H1 (cell line): ENCODE measurements at regions of chr14 and their contacts with region 1.

Region 1: DNA sequence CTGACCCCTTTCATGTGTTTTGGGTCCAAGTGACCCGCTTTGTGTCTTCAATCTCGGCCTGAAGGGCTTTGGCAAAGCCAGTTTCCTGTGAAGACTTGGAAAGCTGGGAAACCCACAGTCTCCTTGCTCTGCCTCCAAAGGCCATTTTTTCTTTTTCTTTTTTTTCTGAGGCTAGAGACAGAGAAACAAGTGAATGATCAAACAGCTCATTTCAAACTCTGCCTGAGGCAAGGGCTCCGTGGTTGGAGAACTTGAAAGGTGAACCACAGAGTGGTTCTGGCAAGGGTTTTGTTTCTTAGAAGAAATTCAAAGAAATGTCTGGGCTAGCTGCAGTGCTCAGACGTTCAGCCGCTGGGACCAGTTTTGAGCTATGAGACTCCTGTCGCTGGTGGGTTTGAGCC is 62.7 kb downstream of the ERH start:
- DNase-seq: no peak
- H3K4me3 ChIP-seq: no peak overlapping the region
- H3K27ac ChIP-seq: no peak overlapping the region
- H3K4me1 ChIP-seq: peaks cover 0 to 2% (median 0%) of the 10 kb centered on the region in 4 experiments; a peak in 1 of 7 replicates
- H3K27me3 ChIP-seq: no peaks in the 10 kb centered on the region
- CTCF ChIP-seq: no peak
- EP300 ChIP-seq: no peak
- POLR2A ChIP-seq: no peak
- RAD21 ChIP-seq: no peak

Region 2: GRCh38 chr14:68924186-68925158 is 410.9 kb before region 1 on chr14:
- CTCF ChIA-PET with region 1: no interaction called
- POLR2A ChIA-PET with region 1: no interaction called
- DNase-seq: peak in 1 of 2 experiments; percentile 47
- H3K4me3 ChIP-seq: no peak overlapping the region
- H3K27ac ChIP-seq: no peak overlapping the region; the same call in 1 of the 2 replicates
- H3K4me1 ChIP-seq: peaks cover 0 to 13% (median 9%) of the 10 kb centered on the region in 4 experiments; a peak in 5 of 7 replicates
- H3K27me3 ChIP-seq: no peaks in the 10 kb centered on the region
- CTCF ChIP-seq: no peak
- EP300 ChIP-seq: no peak
- POLR2A ChIP-seq: no peak
- RAD21 ChIP-seq: no peak

Region 3: GRCh38 chr14:69247676-69248440 is 87.5 kb before region 1 on chr14:
- CTCF ChIA-PET with region 1: interaction called, 10 read pairs
- POLR2A ChIA-PET with region 1: no interaction called
- DNase-seq: no peak
- H3K4me3 ChIP-seq: no peak overlapping the region
- H3K27ac ChIP-seq: no peak overlapping the region
- H3K4me1 ChIP-seq: no peaks in the 10 kb centered on the region; a peak in 1 of 7 replicates
- H3K27me3 ChIP-seq: no peaks in the 10 kb centered on the region
- CTCF ChIP-seq: no peak
- EP300 ChIP-seq: no peak
- POLR2A ChIP-seq: no peak
- RAD21 ChIP-seq: no peak

Region 4: DNA sequence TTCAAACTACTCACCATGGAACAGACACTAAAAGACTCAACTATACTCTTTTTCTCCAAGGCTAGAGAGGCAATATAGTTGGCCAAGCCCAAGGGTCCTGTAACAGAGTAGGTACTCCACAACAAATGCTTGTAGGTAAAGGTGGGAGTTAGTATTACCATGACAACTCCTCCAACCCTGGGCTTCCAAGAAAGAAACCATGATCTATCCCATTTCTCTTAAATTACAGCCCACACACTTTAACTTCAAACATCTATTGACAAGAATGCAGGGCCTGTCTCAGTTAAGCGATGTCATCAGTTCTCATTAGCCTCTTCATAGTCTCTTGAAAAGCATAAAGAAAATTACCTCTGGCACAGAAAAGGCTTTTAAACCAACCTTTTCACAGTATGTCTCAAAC is 37.7 kb after region 1 on chr14:
- CTCF ChIA-PET with region 1: no interaction called
- POLR2A ChIA-PET with region 1: no interaction called
- DNase-seq: no peak
- H3K4me3 ChIP-seq: no peak overlapping the region
- H3K27ac ChIP-seq: no peak overlapping the region
- H3K4me1 ChIP-seq: no peaks in the 10 kb centered on the region
- H3K27me3 ChIP-seq: no peaks in the 10 kb centered on the region
- CTCF ChIP-seq: no peak
- EP300 ChIP-seq: no peak
- POLR2A ChIP-seq: no peak
- RAD21 ChIP-seq: no peak